ENCODE measurements at regions of chr1 and their contacts with region 1.

Region 1: GRCh38 chr1:160098852-160099561 is 588 bp upstream of the IGSF8 start:
- H3K4me3 ChIP-seq: peak overlapping the region; percentile 15
- H3K27ac ChIP-seq: no peak overlapping the region
- H3K4me1 ChIP-seq: peaks cover 4% of the 10 kb centered on the region
- CTCF ChIP-seq: no peak

Region 2: GRCh38 chr1:159669338-159669737 is 429.7 kb before region 1 on chr1:
- CTCF ChIA-PET with region 1: no interaction called
- POLR2A ChIA-PET with region 1: no interaction called
- H3K4me3 ChIP-seq: no peak overlapping the region
- H3K27ac ChIP-seq: no peak overlapping the region
- H3K4me1 ChIP-seq: no peaks in the 10 kb centered on the region
- CTCF ChIP-seq: no peak

Region 3: GRCh38 chr1:160085686-160086455 is 13.1 kb before region 1 on chr1:
- CTCF ChIA-PET with region 1: interaction called, 64 read pairs
- POLR2A ChIA-PET with region 1: interaction called, 11 read pairs
- H3K4me3 ChIP-seq: no peak overlapping the region
- H3K27ac ChIP-seq: no peak overlapping the region
- H3K4me1 ChIP-seq: no peaks in the 10 kb centered on the region
- CTCF ChIP-seq: peak; percentile 82

Region 4: DNA sequence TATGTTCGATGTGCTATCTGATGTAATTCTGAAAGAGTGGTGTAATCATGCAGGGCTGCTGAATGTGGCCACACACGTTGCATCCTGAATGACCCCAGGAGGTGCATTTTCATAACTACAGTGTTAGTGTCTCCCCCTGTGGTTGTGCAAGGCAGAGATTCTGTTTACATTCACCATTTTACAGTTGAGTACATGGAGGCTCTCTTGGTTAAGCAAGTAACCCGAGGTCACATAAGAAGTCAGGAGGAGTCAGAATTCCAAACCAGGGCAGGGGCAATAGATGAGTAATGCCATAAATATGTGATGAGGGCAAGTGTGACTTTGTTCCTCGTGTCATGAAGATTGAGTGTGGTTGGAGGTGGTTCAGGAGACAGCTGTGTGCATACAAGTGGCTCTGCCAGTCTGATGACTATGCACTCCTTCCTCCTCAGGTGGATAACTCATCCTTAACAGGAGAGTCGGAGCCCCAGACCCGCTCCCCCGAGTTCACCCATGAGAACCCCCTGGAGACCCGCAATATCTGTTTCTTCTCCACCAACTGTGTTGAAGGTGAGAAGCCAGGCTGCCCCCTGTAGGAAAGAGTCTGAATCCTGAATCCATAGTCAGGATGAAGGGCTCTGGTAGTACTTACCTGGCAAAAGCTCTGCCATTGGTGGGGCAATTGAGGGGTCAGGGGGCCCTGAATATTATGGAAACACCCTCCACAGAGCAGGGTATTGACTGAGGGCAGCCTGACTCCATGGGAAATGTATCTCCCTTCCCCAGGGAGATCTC is 25.9 kb after region 1 on chr1:
- CTCF ChIA-PET with region 1: interaction called, 14 read pairs
- POLR2A ChIA-PET with region 1: no interaction called
- H3K4me3 ChIP-seq: no peak overlapping the region
- H3K27ac ChIP-seq: no peak overlapping the region
- H3K4me1 ChIP-seq: no peaks in the 10 kb centered on the region
- CTCF ChIP-seq: no peak

Region 5: DNA sequence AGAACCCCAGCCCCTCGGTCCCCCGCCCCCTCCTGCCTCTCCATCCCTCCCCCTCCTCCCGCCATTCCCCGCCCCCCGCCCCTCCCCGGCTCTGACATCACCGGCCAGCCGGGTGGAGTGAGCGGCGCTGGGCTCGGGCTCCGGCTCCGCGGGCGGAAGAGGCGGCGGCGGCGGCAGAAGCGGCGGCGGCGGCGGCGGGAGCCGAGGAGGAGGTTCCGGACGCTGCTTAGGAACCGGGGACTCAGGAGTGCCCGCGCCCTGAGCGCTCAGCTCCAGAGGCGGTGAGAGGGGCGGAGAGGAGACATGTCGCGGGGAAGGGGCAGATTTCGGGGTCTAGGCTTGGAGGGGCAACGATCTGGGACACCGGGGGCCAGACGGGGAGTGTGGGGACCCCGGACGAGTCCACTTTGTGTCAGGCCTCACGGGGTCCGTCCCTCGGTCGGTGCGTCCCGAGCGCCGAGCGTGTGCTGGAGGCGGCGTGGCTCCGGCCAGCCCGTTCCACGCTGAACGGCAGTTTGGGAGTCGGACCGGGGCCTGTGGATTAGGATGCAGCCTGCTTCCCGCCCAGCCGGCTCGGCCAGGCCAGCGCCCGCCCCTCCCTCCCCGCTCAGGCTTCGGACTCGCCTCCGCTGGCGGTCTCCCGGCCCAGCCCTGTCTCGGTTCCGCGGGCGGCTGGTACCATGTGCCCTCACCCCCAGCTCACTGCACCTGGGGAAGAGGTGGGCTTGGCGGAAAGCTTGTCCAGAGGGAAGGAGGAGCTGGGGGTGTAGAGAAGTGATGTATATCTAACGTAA is 106.4 kb after region 1 on chr1 and contains the start of gene PEA15:
- CTCF ChIA-PET with region 1: interaction called, 15 read pairs
- POLR2A ChIA-PET with region 1: no interaction called
- H3K4me3 ChIP-seq: peak within 1 kb of the TSS; percentile 70
- H3K27ac ChIP-seq: peak within 1 kb of the TSS; percentile 82
- H3K4me1 ChIP-seq: 0 out of 2 replicates have a peak, but pooled peaks cover 2% of the 10 kb centered on the region
- CTCF ChIP-seq: 0 out of 2 replicates have a peak, but pooled peaks have one; percentile 16